GM12878 (cell line): ENCODE measurements at regions of chr20 and their contacts with region 1.

Region 1: GRCh38 chr20:38221119-38221589 is 39.4 kb downstream of the KIAA1755 start:
- DNase-seq: no peak
- ATAC-seq: peak; percentile 92
- H3K4me3 ChIP-seq: no peak overlapping the region
- H3K27ac ChIP-seq: no peak overlapping the region
- H3K4me1 ChIP-seq: no peaks in the 10 kb centered on the region
- H3K27me3 ChIP-seq: no peaks in the 10 kb centered on the region; a peak in 1 of 4 replicates
- CTCF ChIP-seq: peak; percentile 85 to 95 (median 88)
- EP300 ChIP-seq: no peak
- POLR2A ChIP-seq: no peak
- RAD21 ChIP-seq: peak; percentile 88

Region 2: DNA sequence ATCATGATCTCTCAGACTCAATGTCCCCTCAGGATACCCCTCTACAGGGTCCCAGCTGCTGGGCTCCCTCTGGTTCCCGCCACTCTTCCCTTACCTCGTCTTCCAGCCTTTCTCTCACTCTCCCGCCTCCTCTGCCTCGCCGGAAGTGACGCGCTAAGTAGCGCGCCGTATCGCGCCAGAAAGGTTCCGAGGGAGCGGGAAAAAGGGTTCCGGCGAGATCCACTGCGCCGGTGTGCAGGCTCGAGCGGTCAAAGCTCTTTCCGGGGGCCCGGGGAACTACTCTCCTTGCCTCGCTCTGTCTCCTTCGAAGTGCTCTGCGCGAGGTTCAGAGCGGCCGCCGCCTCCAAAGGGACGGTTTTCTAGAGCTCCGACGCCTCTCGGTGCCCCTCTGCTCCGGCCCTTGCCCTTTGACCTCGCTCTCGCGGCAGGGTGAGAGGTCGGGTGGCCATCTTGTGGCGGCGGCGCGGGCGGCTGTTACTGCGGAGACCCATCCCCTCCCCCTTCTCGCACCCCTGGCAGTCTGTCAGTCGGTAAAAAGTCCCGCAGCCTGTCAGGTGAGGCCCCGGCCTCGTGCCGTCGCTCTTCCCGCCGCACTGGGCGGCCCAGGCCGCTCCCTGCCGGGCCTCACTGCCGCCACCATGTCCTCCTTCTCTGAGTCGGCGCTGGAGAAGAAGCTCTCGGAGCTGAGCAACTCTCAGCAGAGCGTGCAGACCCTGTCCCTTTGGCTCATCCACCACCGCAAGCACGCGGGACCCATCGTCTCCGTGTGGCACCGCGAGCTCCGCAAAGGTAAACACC is 187.6 kb before region 1 on chr20 and contains the starts of genes RPRD1B and TTI1:
- CTCF ChIA-PET with region 1: interaction called, 12 read pairs
- POLR2A ChIA-PET with region 1: no interaction called
- RAD21 ChIA-PET with region 1: interaction called, 6 read pairs
- SMC1A ChIA-PET with region 1: interaction called, 14 read pairs
- in situ Hi-C with region 1: no loop called
- intact Hi-C with region 1: no loop called
- DNase-seq: peak; percentile 65
- ATAC-seq: peak; percentile 83
- H3K4me3 ChIP-seq: peak within 1 kb of the TSS; percentile 91
- H3K27ac ChIP-seq: peak within 1 kb of the TSS; percentile 96
- H3K4me1 ChIP-seq: peaks cover 10% of the 10 kb centered on the region
- H3K27me3 ChIP-seq: no peaks in the 10 kb centered on the region
- CTCF ChIP-seq: no peak
- EP300 ChIP-seq: no peak
- POLR2A ChIP-seq: peak; percentile 87
- RAD21 ChIP-seq: no peak
- polyA plus RNA-seq, gene RPRD1B: 5.2 to 10.7 TPM
- polyA plus RNA-seq, gene TTI1: 5.3 to 5.5 TPM

Region 3: DNA sequence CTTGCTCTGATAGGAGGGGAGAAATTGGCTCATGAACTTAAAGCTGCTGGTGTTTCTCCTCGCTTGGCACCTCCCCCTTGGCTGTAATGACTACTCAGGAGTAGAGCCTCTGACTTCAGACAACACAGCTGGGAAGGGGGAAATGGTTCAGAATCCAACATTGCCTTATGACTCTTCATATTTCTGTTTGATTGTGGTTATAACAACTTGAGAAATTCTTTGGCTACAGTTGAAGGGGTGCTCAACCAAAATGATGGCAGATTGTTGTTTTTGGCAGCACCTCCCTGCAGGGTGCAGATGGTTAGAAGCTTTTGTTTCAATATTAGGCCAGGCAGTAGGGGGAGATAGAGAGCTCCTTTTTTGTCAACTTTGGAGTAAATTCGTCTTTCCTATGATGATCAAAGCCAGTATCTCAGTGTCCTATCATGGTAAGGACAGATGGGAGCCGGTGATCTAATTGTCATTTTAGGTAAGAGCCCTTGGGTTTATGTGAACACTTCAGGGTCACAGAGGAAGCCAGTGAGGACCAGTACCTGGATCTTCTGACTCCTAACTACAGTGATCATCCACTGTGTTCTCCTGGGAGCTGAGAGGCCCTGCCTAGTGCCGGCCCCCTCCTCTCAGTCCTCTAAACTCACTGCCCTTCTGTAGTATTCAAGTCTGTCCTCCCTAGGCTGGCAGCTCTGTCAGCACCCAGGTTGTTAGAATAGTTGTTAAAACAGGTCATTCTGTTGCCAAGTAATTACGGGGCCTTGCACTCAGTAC is 147.7 kb before region 1 on chr20:
- CTCF ChIA-PET with region 1: interaction called, 175 read pairs
- POLR2A ChIA-PET with region 1: no interaction called
- RAD21 ChIA-PET with region 1: interaction called, 80 read pairs
- SMC1A ChIA-PET with region 1: interaction called, 46 read pairs
- in situ Hi-C with region 1: no loop called
- intact Hi-C with region 1: loop called (anchors 1 kb)
- DNase-seq: no peak
- ATAC-seq: peak; percentile 92
- H3K4me3 ChIP-seq: no peak overlapping the region
- H3K27ac ChIP-seq: no peak overlapping the region
- H3K4me1 ChIP-seq: peaks cover 13% of the 10 kb centered on the region
- H3K27me3 ChIP-seq: no peaks in the 10 kb centered on the region
- CTCF ChIP-seq: peak; percentile 62 to 75 (median 71)
- EP300 ChIP-seq: no peak
- POLR2A ChIP-seq: no peak
- RAD21 ChIP-seq: peak; percentile 77

Region 4: DNA sequence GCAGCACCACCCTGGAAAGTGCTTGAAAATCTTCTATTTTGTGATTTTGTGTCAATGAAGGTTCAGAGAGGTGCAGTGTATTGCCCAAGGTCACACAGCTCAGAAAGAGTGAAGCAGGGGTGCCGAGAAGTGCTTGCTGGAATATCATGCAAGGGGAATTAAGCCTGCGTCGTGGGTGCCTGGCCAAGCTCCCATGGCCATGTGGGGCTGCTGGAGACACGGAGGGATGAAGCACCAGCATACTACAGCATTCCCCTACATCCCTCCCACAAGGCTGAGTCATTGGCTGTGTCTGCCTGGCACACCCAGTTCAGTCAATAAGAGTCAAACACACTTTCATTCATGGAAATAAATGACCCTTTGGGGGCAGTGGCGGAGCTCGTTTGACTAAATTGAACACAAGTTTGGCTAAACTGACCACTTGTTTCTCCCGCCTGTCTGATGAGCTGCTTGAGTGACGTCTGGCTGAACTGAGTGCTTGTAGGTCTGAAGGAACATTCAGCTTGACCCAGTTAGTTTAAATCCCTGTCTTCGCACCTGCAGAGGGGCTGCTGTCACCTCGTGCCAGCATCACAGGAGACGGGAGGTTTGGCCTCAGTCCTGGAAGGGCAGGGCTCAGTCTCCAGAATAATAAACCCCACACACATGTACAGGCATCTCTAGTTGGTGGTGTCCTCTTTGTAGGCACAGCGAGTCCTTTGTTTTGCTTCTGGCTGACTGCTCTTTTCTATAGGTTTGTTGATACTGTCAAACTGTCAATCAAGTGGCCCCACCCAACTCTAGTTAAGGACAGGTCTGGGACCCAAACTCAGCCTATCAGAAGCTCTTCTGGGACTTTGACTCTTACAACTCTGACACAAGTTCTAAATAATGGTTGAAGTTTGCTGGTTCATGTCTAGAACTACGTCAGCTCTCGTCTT is 47.7 kb before region 1 on chr20:
- CTCF ChIA-PET with region 1: interaction called, 20 read pairs
- POLR2A ChIA-PET with region 1: no interaction called
- RAD21 ChIA-PET with region 1: interaction called, 3 read pairs
- SMC1A ChIA-PET with region 1: interaction called, 22 read pairs
- in situ Hi-C with region 1: no loop called
- intact Hi-C with region 1: loop called (anchors 5 kb)
- DNase-seq: no peak
- ATAC-seq: no peak
- H3K4me3 ChIP-seq: no peak overlapping the region
- H3K27ac ChIP-seq: no peak overlapping the region
- H3K4me1 ChIP-seq: peaks cover 14% of the 10 kb centered on the region
- H3K27me3 ChIP-seq: no peaks in the 10 kb centered on the region; a peak in 2 of 4 replicates
- CTCF ChIP-seq: no peak
- EP300 ChIP-seq: no peak
- POLR2A ChIP-seq: no peak
- RAD21 ChIP-seq: no peak

Region 5: GRCh38 chr20:38203337-38203980 is 17.7 kb before region 1 on chr20:
- CTCF ChIA-PET with region 1: interaction called, 35 read pairs
- POLR2A ChIA-PET with region 1: no interaction called
- RAD21 ChIA-PET with region 1: interaction called, 3 read pairs
- SMC1A ChIA-PET with region 1: interaction called, 5 read pairs
- in situ Hi-C with region 1: no loop called
- intact Hi-C with region 1: no loop called
- DNase-seq: no peak
- ATAC-seq: no peak
- H3K4me3 ChIP-seq: no peak overlapping the region
- H3K27ac ChIP-seq: no peak overlapping the region
- H3K4me1 ChIP-seq: no peaks in the 10 kb centered on the region
- H3K27me3 ChIP-seq: no peaks in the 10 kb centered on the region; a peak in 1 of 4 replicates
- CTCF ChIP-seq: no peak
- EP300 ChIP-seq: no peak
- POLR2A ChIP-seq: no peak
- RAD21 ChIP-seq: no peak

Region 6: DNA sequence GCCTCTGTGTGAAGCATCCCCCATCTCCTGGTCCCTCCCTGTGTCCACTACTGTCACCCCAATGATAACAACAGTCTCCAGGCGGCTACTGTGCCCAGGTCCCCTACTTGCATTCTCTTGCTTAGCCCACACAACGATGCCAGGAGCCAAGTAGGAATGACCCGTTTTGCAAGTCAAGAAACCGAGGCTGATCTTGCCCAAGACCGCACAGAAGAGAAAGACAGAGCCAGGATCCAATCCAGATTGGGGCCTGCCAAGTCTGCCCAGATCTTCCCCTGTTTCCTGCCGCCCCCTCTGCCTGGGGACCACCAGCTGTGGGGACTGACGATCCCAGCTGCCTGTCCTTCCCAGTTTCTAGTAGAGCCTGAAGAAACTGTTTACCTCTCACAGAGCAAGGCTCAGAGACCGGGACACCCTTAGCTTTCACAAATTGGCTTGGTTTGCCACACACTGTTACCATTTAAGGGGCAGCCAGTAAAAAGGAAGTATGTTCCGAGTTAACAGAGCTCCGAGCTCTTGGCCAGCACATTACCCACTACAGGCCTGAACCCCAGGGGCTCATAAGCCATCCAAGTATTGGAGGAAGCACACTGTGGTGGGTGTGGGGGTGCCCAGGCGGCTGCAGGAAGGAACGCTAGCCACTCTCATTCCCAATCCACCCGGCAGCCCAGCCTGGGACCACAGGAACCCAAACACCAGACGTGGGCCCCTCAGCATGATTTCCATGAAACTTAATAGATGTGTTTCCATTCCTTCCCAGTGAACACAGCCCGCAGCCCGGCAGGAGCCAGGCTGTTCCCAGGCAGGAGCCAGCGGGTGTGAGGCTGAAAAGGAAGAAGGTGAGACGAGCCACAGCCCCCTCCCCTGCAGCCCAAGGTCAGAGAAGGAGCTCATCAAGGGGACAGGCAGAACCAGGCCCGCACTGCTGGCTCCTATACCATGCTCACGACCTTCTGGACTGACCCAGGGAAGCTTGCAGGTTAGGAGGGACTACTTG is 31.4 kb after region 1 on chr20:
- CTCF ChIA-PET with region 1: no interaction called
- POLR2A ChIA-PET with region 1: no interaction called
- RAD21 ChIA-PET with region 1: no interaction called
- SMC1A ChIA-PET with region 1: no interaction called
- in situ Hi-C with region 1: no loop called
- intact Hi-C with region 1: no loop called
- DNase-seq: no peak
- ATAC-seq: no peak
- H3K4me3 ChIP-seq: no peak overlapping the region
- H3K27ac ChIP-seq: no peak overlapping the region
- H3K4me1 ChIP-seq: no peaks in the 10 kb centered on the region
- H3K27me3 ChIP-seq: no peaks in the 10 kb centered on the region; a peak in 1 of 4 replicates
- CTCF ChIP-seq: no peak
- EP300 ChIP-seq: no peak
- POLR2A ChIP-seq: no peak
- RAD21 ChIP-seq: no peak

Region 7: DNA sequence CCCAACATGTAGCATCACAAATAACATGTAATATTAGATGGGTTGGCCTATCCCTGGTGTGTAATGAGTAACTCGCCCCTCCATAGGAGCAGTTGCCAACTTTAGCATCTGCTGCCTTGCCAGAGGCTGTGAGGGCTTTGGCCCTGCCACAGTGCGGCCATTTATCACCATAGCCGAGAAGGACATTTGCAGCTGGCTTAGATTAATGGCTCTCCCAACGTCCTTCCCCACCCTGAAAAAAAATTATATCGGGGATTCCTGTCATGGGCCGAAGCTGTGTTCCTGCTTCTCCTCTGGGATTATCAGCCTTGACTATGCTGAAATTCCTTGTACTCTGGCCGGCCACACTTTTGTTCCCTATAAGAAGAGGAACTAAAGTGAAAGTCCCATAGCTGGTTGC is 352.3 kb after region 1 on chr20:
- CTCF ChIA-PET with region 1: no interaction called
- POLR2A ChIA-PET with region 1: no interaction called
- RAD21 ChIA-PET with region 1: no interaction called
- SMC1A ChIA-PET with region 1: no interaction called
- in situ Hi-C with region 1: no loop called
- intact Hi-C with region 1: no loop called
- DNase-seq: no peak
- ATAC-seq: no peak
- H3K4me3 ChIP-seq: no peak overlapping the region
- H3K27ac ChIP-seq: no peak overlapping the region
- H3K4me1 ChIP-seq: no peaks in the 10 kb centered on the region
- H3K27me3 ChIP-seq: no peaks in the 10 kb centered on the region
- CTCF ChIP-seq: no peak
- EP300 ChIP-seq: no peak
- POLR2A ChIP-seq: no peak
- RAD21 ChIP-seq: no peak